Common myeloid progenitor, CD34-positive (primary cell): ENCODE measurements at regions of chr3 and their contacts with region 1.

Region 1: GRCh38 chr3:196554205-196554604 is 14.1 kb downstream of the WDR53 start:
- DNase-seq: peak; percentile 54 to 83 (median 74)
- H3K4me3 ChIP-seq: peak overlapping the region in 4 of 7 experiments; percentile 2 to 41 (median 13)
- H3K27ac ChIP-seq: peak overlapping the region in 1 of 2 experiments; percentile 45
- H3K4me1 ChIP-seq: peaks cover 9 to 32% (median 14%) of the 10 kb centered on the region in 4 experiments
- H3K27me3 ChIP-seq: no peaks in the 10 kb centered on the region

Region 2: GRCh38 chr3:196537319-196537984 is 16.8 kb before region 1 on chr3:
- CTCF ChIA-PET with region 1: interaction called, 14 read pairs
- POLR2A ChIA-PET with region 1: no interaction called
- DNase-seq: peak in 2 of 3 donors; percentile 51 to 55
- H3K4me3 ChIP-seq: no peak overlapping the region
- H3K27ac ChIP-seq: no peak overlapping the region
- H3K4me1 ChIP-seq: peaks cover 0 to 4% (median 2%) of the 10 kb centered on the region in 4 experiments
- H3K27me3 ChIP-seq: no peaks in the 10 kb centered on the region